Gastrocnemius medialis (tissue), 4 donors: ENCODE measurements at regions of chr4 and their contacts with region 1.

Region 1: GRCh38 chr4:154626793-154627484 is 14.5 kb upstream of the FGG start:
- DNase-seq: no peak
- ATAC-seq: no peak
- H3K4me3 ChIP-seq: peak overlapping the region in 3 of 4 donors; percentile 13 to 29 (median 18)
- H3K27ac ChIP-seq: no peak overlapping the region
- H3K4me1 ChIP-seq: peaks cover 0 to 3% of the 10 kb centered on the region in 2 donors
- H3K27me3 ChIP-seq: peaks cover 0 to 4% (median 0%) of the 10 kb centered on the region in 3 donors
- CTCF ChIP-seq: peak in 1 of 5 experiments; percentile 26
- POLR2A ChIP-seq: no peak

Region 2: GRCh38 chr4:154329268-154329868 is 297.6 kb before region 1 on chr4:
- in situ Hi-C with region 1: no loop called
- intact Hi-C with region 1: loop called (anchors 10 kb)
- DNase-seq: no peak
- ATAC-seq: no peak
- H3K4me3 ChIP-seq: no peak overlapping the region
- H3K27ac ChIP-seq: no peak overlapping the region
- H3K4me1 ChIP-seq: no peaks in the 10 kb centered on the region
- H3K27me3 ChIP-seq: peaks cover 0 to 11% (median 5%) of the 10 kb centered on the region in 3 donors
- CTCF ChIP-seq: no peak
- POLR2A ChIP-seq: no peak

Region 3: DNA sequence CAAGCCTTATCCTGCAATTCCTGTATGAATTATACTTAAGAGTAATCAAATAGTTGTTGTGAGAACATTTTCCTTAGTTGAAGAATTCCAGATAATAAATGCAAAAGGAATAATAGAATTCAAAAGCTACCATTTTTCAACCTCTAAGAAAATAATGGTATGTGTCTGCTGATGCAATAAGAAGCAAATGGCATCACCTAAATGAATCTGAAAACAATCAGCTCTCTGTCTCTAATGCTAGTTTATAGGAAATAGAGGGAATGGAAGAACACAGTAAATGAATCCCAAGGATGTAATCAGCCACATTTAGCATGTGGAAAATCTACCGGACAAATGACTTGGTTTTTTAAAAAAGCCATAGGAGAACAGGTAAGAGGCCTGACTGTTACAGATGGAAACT is 250.5 kb before region 1 on chr4:
- in situ Hi-C with region 1: no loop called
- intact Hi-C with region 1: no loop called
- DNase-seq: no peak
- ATAC-seq: no peak
- H3K4me3 ChIP-seq: no peak overlapping the region
- H3K27ac ChIP-seq: no peak overlapping the region
- H3K4me1 ChIP-seq: no peaks in the 10 kb centered on the region
- H3K27me3 ChIP-seq: no peaks in the 10 kb centered on the region
- CTCF ChIP-seq: no peak
- POLR2A ChIP-seq: no peak